Pancreas (tissue), 10 donors: ENCODE measurements at regions of chr17 and their contacts with region 1.

Region 1: GRCh38 chr17:12256380-12256995 is 235.8 kb downstream of the MAP2K4 start:
- DNase-seq: peak in 2 of 6 donors; percentile 9 to 34
- ATAC-seq: peak in 3 of 4 donors; percentile 71 to 82 (median 82)
- H3K4me3 ChIP-seq: no peak overlapping the region
- H3K27ac ChIP-seq: no peak overlapping the region
- H3K4me1 ChIP-seq: no peaks in the 10 kb centered on the region
- H3K27me3 ChIP-seq: peaks cover 0 to 13% (median 0%) of the 10 kb centered on the region in 4 donors
- CTCF ChIP-seq: peak; percentile 42 to 78 (median 72)

Region 2: GRCh38 chr17:12667299-12667958 is 410.9 kb after region 1 on chr17:
- intact Hi-C with region 1: loop called in 1 of 3 experiments (anchors 10 kb)
- DNase-seq: no peak
- ATAC-seq: peak in 3 of 4 donors; percentile 62 to 75 (median 64)
- H3K4me3 ChIP-seq: no peak overlapping the region
- H3K27ac ChIP-seq: no peak overlapping the region
- H3K4me1 ChIP-seq: peaks cover 0 to 4% (median 0%) of the 10 kb centered on the region in 3 donors
- H3K27me3 ChIP-seq: peaks cover 0 to 20% (median 0%) of the 10 kb centered on the region in 4 donors
- CTCF ChIP-seq: peak in 1 of 4 donors; percentile 12

Region 3: DNA sequence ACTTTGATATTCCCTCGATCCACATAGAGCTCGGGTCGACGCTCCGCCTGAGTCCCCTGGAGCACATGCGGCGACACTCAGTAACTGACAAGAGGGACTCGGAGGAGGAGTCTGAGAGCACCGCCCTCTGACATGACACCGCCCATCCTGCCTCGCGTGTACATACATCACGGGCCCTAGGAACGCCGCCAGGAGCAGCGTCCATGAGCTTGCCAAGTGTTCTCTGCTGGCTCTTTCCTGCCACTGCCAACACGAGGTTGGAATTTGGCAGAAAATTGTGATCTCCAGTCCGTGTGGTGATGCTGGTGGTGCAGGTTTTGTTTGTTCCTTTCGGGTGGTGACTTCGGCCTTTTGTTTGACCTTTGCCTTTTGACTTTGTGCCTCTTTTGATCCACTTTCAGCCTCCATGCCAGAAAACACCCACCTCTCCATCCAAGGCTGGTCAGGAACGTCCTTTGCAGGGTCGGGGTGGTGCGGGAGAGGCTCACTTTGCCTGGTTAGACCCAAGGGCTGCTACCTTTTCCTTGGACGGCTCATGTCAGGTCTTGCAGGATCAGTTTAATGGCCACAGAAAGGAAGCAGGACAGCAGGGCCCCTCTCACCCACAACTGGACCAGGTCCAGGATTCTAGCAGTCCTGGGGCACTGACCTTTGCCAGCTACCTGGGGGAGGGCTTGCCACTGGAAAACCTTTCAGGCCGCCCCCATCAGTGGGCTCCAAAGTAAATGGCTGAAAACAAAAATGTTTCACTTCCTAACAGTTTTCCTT is 733.7 kb after region 1 on chr17:
- intact Hi-C with region 1: loop called in 2 of 3 experiments (anchors 10 kb)
- DNase-seq: peak in 1 of 6 donors; percentile 6
- ATAC-seq: peak in 1 of 4 donors; percentile 47
- H3K4me3 ChIP-seq: no peak overlapping the region
- H3K27ac ChIP-seq: no peak overlapping the region
- H3K4me1 ChIP-seq: no peaks in the 10 kb centered on the region
- H3K27me3 ChIP-seq: no peaks in the 10 kb centered on the region
- CTCF ChIP-seq: no peak